ENCODE measurements at regions of chr2 and their contacts with region 1.

Region 1: DNA sequence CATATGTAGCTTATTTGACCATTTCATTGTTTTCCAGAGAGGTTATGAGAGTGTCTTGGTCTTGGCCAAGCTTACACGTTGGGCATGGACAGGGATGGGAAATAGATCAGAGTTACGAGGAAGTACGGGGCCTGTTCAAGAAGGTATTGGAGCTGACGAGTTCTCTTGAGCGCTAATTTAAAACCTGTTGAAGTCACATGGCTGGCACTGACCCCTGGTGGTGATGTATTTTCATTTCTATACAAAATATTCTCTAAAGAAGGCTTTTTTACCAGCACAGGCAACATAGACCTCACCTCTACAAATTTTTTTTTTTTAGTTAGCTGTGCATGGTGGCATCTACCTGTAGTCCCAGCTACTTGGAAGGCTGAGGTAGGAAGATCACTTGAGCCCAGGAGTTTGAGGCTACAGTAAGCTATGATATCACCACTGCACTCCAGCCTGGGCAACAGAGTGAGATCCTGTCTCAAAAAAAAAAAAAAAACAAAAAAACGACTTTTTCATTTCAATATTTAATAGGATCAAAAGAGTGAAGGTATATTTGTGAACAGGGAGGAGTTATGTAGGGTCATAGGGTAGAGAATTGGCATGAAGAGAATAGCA is 19.6 kb downstream of the UGP2 start:
- DNase-seq: peak; percentile 50
- H3K4me3 ChIP-seq: no peak overlapping the region
- CTCF ChIP-seq: peak; percentile 44

Region 2: GRCh38 chr2:63698825-63699548 is 162.3 kb before region 1 on chr2:
- in situ Hi-C with region 1: loop called (anchors 25 kb)
- DNase-seq: peak; percentile 68
- H3K4me3 ChIP-seq: no peak overlapping the region
- CTCF ChIP-seq: peak; percentile 72